ENCODE measurements at regions of chr4 and their contacts with region 1.

Region 1: DNA sequence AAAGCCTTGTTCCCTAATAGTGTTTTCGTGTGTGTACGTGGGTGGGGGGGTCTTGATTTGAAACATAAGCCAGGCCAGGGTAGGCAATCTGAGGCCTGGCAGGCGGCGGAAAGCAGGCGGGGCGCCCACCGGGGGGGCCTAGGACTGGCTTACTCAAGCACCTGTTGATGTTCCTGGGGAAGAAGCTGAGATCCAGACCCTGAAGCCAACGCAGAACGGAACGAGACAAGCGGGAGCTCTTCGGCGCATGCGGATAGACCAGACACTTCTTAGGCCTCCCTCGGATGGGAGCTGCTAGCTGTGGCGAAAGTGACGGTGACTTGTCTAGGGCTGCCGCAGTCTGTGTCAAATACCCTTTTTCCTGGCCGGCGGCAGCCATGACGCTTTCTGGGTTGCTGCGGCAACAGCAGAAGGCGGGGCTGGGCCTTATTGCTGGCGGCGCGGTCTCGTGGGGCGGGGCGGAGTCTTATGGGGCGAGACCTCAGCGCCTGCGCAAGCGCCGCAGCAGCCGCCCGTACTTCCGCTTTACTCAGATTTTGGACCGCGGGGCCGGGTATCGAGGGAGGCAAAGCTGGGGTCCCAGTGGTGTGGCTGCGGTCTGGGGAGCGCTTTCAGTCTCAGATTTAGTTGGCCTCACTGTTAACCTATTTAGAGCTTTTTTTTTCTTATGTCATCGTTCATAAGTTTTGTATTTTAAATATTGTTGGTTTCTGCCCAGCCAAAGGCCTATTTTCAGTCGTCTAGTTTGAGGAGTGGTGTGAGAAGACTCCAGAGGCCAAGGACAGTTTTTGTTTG is at the start of gene SPATA4:
- DNase-seq: peak; percentile 89 to 96 (median 94)
- H3K4me3 ChIP-seq: peak within 1 kb of the TSS; percentile 57 to 88 (median 76)
- H3K27ac ChIP-seq: peak within 1 kb of the TSS in 55 of 59 donors; percentile 5 to 88 (median 74)
- H3K27me3 ChIP-seq: no peaks in the 10 kb centered on the region
- CTCF ChIP-seq: peak in 18 of 56 donors; percentile 8 to 45 (median 22)
- total RNA-seq, gene SPATA4: 0.28 to 4.2 (median 1.2) TPM in 112 of 120 experiments, not detected in the others

Region 2: GRCh38 chr4:176065435-176066291 is 129.7 kb before region 1 on chr4 and contains the start of gene WDR17:
- intact Hi-C with region 1: loop called in 1 of 2 experiments (anchors 10 kb)
- DNase-seq: peak; percentile 93 to 97 (median 96)
- H3K4me3 ChIP-seq: peak within 1 kb of the TSS; percentile 61 to 94 (median 80)
- H3K27ac ChIP-seq: peak within 1 kb of the TSS in 54 of 59 donors; percentile 20 to 87 (median 71)
- H3K27me3 ChIP-seq: no peaks in the 10 kb centered on the region
- CTCF ChIP-seq: peak in 11 of 56 donors; percentile 4 to 34 (median 14)
- total RNA-seq, gene WDR17: 31.8 to 105 (median 65.6) TPM

Region 3: GRCh38 chr4:176123710-176124407 is 71.5 kb before region 1 on chr4:
- intact Hi-C with region 1: no loop called
- DNase-seq: peak in 3 of 10 donors; percentile 14 to 36 (median 20)
- H3K4me3 ChIP-seq: no peak overlapping the region
- H3K27ac ChIP-seq: no peak overlapping the region
- H3K27me3 ChIP-seq: no peaks in the 10 kb centered on the region
- CTCF ChIP-seq: peak; percentile 9 to 72 (median 56)

Region 4: GRCh38 chr4:176309046-176309445 is 113.7 kb after region 1 on chr4:
- intact Hi-C with region 1: no loop called
- DNase-seq: no peak
- H3K4me3 ChIP-seq: no peak overlapping the region
- H3K27ac ChIP-seq: no peak overlapping the region
- H3K27me3 ChIP-seq: no peaks in the 10 kb centered on the region
- CTCF ChIP-seq: no peak

Region 5: DNA sequence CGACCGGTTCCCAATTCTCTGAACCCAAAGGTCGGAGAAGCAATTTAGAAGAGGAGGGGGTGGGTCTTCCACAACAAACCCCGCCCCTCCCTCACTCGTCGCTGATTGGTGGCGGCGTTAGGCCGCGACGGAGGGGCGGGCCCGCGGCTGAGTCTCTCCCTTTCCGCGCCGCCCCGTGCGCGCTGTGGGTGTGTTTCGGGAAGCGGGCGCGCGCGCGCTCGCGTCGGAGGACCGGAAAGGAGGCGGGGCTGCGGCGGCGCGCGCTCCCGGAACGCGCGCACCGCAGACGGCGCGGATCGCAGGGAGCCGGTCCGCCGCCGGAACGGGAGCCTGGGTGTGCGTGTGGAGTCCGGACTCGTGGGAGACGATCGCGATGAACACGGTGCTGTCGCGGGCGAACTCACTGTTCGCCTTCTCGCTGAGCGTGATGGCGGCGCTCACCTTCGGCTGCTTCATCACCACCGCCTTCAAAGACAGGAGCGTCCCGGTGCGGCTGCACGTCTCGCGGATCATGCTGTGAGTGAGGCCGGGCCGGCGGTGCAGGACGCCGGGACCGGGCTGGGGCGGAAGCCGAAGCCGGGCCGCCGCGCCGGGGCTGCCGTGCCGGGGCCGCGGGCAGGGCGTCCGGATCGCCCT is 124.4 kb after region 1 on chr4 and contains the start of gene SPCS3:
- intact Hi-C with region 1: loop called (anchors 1 to 2 kb)
- DNase-seq: peak; percentile 93 to 99 (median 96)
- H3K4me3 ChIP-seq: peak within 1 kb of the TSS; percentile 60 to 97 (median 84)
- H3K27ac ChIP-seq: peak within 1 kb of the TSS; percentile 52 to 99 (median 94)
- H3K27me3 ChIP-seq: no peaks in the 10 kb centered on the region
- CTCF ChIP-seq: peak in 22 of 56 donors; percentile 7 to 40 (median 24)
- total RNA-seq, gene SPCS3: 65.9 to 118 (median 91.8) TPM

Measured in dorsolateral prefrontal cortex (tissue), 120 donors.